RWPE1 (cell line): ENCODE measurements at regions of chr6 and their contacts with region 1.

Region 1: DNA sequence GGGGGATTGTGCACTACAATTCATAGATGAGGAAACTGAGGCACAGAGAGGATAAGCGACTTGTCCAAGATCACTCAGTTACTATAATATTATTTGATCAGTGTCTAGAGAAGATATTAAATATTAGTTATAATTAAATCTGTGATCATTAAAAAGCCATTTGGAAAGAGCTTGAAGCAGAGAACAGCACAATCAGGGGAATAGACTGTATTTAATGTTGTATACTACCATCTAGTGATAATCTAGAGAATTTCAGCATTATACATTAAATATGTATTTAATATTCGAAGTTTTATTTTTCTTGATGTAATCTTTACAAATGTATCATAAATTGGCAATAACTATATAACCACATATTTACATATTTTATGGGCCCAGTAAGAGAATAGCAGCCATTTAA is 20.1 kb upstream of the MTCL3 start:
- DNase-seq: no peak
- H3K27ac ChIP-seq: no peak overlapping the region
- CTCF ChIP-seq: peak; percentile 46; the same call in 1 of the 2 replicates

Region 2: DNA sequence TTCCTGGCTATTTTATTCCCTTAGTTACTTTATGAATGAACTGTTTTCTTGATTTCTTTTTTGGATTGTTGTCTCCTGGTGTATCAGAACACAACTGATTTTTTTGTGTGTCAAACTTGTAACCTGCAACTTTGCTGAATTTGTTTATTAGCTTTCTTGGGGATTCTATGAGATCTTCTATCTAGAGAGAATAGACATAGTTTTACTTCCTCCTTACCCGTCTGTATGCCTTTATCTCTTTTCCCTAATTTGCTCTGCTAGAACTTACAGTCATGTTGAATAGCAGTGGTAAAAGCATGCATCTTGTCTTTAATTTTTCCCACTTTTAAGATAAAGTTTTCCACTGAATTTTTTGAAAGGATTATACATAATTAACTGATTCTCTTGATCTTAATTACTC is 259.5 kb before region 1 on chr6:
- CTCF ChIA-PET with region 1: no interaction called
- POLR2A ChIA-PET with region 1: no interaction called
- DNase-seq: no peak
- H3K27ac ChIP-seq: no peak overlapping the region
- CTCF ChIP-seq: no peak

Region 3: GRCh38 chr6:127464881-127465459 is 74.3 kb before region 1 on chr6:
- CTCF ChIA-PET with region 1: interaction called, 6 read pairs
- POLR2A ChIA-PET with region 1: interaction called, 16 read pairs
- DNase-seq: peak; percentile 50
- H3K27ac ChIP-seq: no peak overlapping the region
- CTCF ChIP-seq: peak; percentile 84

Region 4: GRCh38 chr6:127522714-127523113 is 16.6 kb before region 1 on chr6:
- CTCF ChIA-PET with region 1: no interaction called
- POLR2A ChIA-PET with region 1: no interaction called
- DNase-seq: no peak
- H3K27ac ChIP-seq: no peak overlapping the region
- CTCF ChIP-seq: no peak

Region 5: GRCh38 chr6:127550403-127550802 is 11.1 kb after region 1 on chr6:
- CTCF ChIA-PET with region 1: no interaction called
- POLR2A ChIA-PET with region 1: no interaction called
- DNase-seq: peak; percentile 8
- H3K27ac ChIP-seq: no peak overlapping the region
- CTCF ChIP-seq: no peak